Activated naive CD4-positive, alpha-beta T cell treated with anti-CD3 and anti-CD28 coated beads for 36 hours (primary cell): ENCODE measurements at regions of chr17 and their contacts with region 1.

Region 1: DNA sequence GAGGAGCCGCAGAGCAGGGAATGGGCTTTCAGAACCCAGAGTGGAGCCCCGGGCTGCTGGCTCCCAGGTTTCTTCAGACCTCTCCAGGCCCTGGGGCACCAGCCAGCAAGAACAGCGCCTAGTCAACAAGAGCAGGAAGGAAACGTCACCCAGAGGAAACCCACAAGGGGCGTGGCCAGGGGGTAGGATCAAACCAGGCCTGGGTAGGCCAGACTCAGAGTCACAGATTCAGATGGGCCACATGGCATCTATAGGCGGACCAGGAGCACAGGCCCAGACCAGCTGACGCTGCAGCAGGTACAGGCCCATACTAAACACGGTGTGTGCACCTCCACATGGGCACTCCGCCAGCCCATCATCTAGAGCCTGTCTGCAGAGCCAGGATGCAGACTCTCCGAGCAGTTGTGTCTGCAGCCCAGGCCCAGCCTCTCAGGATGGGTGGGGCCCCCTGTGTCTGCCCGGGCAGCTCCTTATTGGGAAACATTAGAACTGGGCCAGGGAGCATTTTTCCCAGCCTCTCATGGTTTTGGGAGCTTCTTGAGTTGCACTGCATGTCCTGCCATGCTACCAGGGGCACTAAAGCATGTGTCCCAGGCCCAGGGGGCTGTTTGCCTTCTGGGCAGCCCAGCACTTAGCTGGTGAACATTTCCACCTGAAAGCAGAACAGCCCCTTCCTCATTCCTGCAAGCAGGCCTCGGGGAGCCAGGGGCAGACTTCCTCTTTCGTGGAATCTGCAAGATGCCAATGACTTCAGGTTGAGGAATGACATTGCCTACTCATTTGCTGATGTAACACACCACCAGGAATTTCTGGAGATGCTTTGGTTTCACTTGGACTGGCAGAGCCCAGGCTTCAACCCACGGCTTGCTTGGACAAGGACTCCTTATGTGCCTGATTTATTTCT is at the start of gene NLRP1:
- DNase-seq: peak; percentile 99
- H3K4me3 Mint-ChIP-seq: peak within 1 kb of the TSS; percentile 94
- H3K27ac Mint-ChIP-seq: peak within 1 kb of the TSS; percentile 98
- H3K4me1 Mint-ChIP-seq: peaks cover 64% of the 10 kb centered on the region
- H3K27me3 Mint-ChIP-seq: no peaks in the 10 kb centered on the region
- total RNA-seq, gene NLRP1: 44.9 to 49.4 TPM

Region 2: DNA sequence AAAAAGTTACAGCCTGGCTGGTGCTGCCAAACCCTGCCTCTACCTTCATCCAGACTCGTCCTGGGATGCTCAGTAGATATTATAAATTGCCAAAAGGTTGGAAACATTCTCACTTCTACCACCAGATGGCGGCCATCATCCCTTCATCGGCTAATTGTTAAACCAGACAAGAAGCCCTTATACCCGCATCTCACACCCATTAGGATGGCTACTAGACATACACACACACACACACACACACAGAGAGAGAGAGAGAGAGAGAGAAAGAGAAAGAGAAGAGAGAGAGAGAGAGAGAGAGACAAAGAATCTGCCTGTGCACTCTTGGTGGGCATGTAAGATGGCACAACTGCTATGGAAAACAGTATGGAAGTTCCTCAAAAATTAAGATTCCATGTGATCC is 335.0 kb before region 1 on chr17:
- CTCF ChIA-PET with region 1: no interaction called
- intact Hi-C with region 1: loop called (anchors 1 kb)
- DNase-seq: peak; percentile 85
- H3K4me3 Mint-ChIP-seq: no peak overlapping the region
- H3K27ac Mint-ChIP-seq: no peak overlapping the region
- H3K4me1 Mint-ChIP-seq: peaks cover 8% of the 10 kb centered on the region
- H3K27me3 Mint-ChIP-seq: no peaks in the 10 kb centered on the region

Region 3: DNA sequence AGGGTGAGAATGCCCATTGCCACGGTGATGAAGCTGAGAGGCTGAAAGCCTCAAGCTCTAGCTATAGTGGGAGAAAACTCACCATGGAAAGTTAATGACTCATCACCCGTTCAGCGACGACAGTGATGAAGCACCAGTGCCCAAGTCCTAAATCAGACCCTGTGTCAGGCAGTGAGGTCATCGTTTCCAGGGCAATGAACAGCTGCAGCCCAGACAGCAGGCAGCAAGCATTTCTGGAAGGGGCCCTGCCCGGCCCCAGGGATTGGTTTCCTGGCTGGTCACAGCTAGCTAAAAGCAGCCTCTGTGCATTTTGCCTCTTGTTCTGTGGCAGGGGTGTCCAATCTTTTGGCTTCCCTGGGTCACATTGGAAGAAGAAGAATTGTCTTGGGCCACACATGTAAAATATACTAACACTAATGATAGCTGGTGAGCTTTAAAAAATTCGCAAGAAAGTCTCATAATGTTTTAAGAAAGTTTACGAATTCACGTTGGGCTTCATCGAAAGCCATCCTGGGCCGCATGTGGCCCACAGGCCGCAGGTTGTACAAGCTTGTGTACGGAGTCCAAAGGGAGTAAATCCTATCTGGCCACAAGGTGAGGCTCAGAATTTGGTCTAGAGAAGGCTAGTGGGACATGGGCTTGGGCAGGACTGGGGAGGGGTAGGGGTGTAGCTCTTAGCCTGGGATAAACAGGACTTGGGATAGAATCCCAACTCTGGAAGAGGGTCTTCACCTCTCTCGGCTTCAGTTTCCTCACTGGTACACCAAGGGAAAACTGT is 57.6 kb before region 1 on chr17:
- CTCF ChIA-PET with region 1: no interaction called
- intact Hi-C with region 1: loop called (anchors 2 kb)
- DNase-seq: peak; percentile 87
- H3K4me3 Mint-ChIP-seq: no peak overlapping the region
- H3K27ac Mint-ChIP-seq: peak overlapping the region; percentile 80
- H3K4me1 Mint-ChIP-seq: peaks cover 17% of the 10 kb centered on the region
- H3K27me3 Mint-ChIP-seq: no peaks in the 10 kb centered on the region

Region 4: GRCh38 chr17:6215071-6216035 is 630.7 kb after region 1 on chr17:
- CTCF ChIA-PET with region 1: no interaction called
- intact Hi-C with region 1: loop called (anchors 5 kb)
- DNase-seq: no peak
- H3K4me3 Mint-ChIP-seq: no peak overlapping the region
- H3K27ac Mint-ChIP-seq: no peak overlapping the region
- H3K4me1 Mint-ChIP-seq: no peaks in the 10 kb centered on the region
- H3K27me3 Mint-ChIP-seq: peaks cover 40% of the 10 kb centered on the region

Region 5: GRCh38 chr17:6427279-6427781 is 842.7 kb after region 1 on chr17:
- CTCF ChIA-PET with region 1: interaction called, 7 read pairs
- intact Hi-C with region 1: loop called (anchors 1 kb)
- DNase-seq: peak; percentile 75
- H3K4me3 Mint-ChIP-seq: no peak overlapping the region
- H3K27ac Mint-ChIP-seq: peak overlapping the region; percentile 2
- H3K4me1 Mint-ChIP-seq: peaks cover 16% of the 10 kb centered on the region
- H3K27me3 Mint-ChIP-seq: no peaks in the 10 kb centered on the region